ENCODE measurements at regions of chr9 and their contacts with region 1.

Region 1: GRCh38 chr9:131733541-131734061 is 6.3 kb downstream of the RAPGEF1 start:
- DNase-seq: peak in 3 of 4 experiments; percentile 29 to 59 (median 55)
- ATAC-seq: peak; percentile 70
- H3K4me3 ChIP-seq: no peak overlapping the region
- H3K27ac ChIP-seq: peak overlapping the region; percentile 21; the same call in 1 of the 3 replicates
- H3K4me1 ChIP-seq: peaks cover 16 to 20% of the 10 kb centered on the region in 2 experiments
- H3K27me3 ChIP-seq: no peaks in the 10 kb centered on the region
- CTCF ChIP-seq: no peak
- EP300 ChIP-seq: no peak
- POLR2A ChIP-seq: no peak
- RAD21 ChIP-seq: no peak

Region 2: DNA sequence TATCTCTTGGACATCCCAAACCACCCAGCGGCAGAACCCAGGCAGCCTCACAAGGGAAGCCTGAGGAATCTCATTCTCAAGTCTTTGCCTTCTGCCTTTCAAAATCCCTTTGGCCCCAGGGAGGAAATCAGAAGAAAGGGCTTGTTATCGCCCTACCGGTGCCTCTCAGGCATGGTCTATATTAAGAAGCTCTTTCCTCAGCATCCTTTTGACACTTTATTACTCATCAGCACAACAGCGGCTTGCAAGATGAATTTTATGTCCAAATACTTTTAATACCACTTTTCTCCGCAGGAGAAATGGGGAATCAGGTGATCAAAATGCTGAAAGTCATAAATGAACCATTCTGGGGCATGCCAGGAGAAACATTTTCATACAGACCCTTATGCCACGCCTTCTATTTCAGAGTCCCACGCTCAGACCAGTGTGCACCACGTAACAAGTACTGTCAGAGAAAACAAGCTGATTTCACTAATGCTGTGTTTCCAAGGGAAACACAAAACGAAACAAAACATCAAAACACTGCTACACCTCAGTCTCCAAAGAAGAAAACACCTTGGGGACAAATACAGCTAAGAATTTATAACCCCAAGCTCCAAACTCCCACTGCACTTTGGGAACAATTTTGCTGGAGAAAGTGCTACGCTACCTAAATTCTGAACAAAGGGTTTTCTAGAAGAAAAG is 23.7 kb before region 1 on chr9:
- CTCF ChIA-PET with region 1: no interaction called
- POLR2A ChIA-PET with region 1: interaction called, 7 read pairs
- in situ Hi-C with region 1: no loop called
- intact Hi-C with region 1: loop called (anchors 2 kb)
- DNase-seq: no peak
- ATAC-seq: no peak
- H3K4me3 ChIP-seq: no peak overlapping the region
- H3K27ac ChIP-seq: no peak overlapping the region
- H3K4me1 ChIP-seq: peaks cover 6 to 16% of the 10 kb centered on the region in 2 experiments; a peak in 4 of 5 replicates
- H3K27me3 ChIP-seq: no peaks in the 10 kb centered on the region
- CTCF ChIP-seq: no peak
- EP300 ChIP-seq: no peak
- POLR2A ChIP-seq: no peak
- RAD21 ChIP-seq: no peak

Measured in K562 (cell line).